Lower leg skin (tissue), 4 donors: ENCODE measurements at regions of chr18 and their contacts with region 1.

Region 1: DNA sequence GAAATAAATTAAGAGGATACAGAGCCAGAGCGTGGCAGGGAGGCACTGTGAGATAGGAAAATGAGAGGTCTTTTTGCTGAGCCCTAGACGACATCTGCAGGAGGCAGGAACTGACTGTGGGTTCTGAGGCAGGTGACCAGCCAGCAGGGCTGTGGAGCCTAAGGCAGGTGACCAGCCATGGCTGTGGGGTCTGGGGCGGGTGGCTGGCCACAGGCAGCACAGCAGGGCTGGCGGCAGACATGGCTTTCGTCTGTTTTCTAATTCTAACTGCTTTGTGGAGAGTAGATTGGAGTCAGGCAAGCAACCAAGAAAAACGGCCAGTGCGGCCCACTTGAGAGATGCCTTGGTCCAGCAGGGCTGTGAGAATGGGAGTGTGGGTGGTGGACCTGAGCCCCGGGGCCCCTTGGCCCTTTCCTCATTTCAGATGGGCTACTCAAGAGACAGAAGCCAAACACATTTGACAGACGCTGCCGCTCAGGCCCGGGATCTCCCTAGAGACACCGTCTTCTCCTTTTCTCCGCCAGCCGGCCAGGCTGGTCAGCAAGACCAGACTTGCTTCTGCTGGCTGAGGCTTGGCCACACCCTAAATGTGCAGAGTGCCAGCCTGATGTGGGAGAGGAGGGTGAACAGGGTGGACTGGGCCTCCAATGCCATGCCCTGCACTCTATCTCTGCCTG is 19.7 kb upstream of the GNAL start:
- DNase-seq: peak in 1 of 2 donors; percentile 46
- H3K4me3 ChIP-seq: no peak overlapping the region
- CTCF ChIP-seq: no peak
- POLR2A ChIP-seq: no peak

Region 2: GRCh38 chr18:12336875-12337274 is 667.5 kb after region 1 on chr18:
- intact Hi-C with region 1: no loop called
- DNase-seq: no peak
- H3K4me3 ChIP-seq: no peak overlapping the region
- CTCF ChIP-seq: no peak
- POLR2A ChIP-seq: no peak

Region 3: GRCh38 chr18:12420831-12421421 is 751.5 kb after region 1 on chr18:
- intact Hi-C with region 1: loop called (anchors 5 kb)
- DNase-seq: no peak
- H3K4me3 ChIP-seq: no peak overlapping the region
- CTCF ChIP-seq: no peak
- POLR2A ChIP-seq: no peak